ENCODE measurements at regions of chr7 and their contacts with region 1.

Region 1: GRCh38 chr7:73606801-73607691 is 17.3 kb downstream of the MLXIPL start:
- DNase-seq: peak; percentile 43
- H3K4me3 ChIP-seq: no peak overlapping the region
- H3K27ac ChIP-seq: no peak overlapping the region
- H3K4me1 ChIP-seq: no peaks in the 10 kb centered on the region
- H3K27me3 ChIP-seq: no peaks in the 10 kb centered on the region
- CTCF ChIP-seq: peak; percentile 90 to 92
- POLR2A ChIP-seq: no peak

Region 2: GRCh38 chr7:73578342-73579127 is 28.5 kb before region 1 on chr7 and contains the start of gene TBL2:
- CTCF ChIA-PET with region 1: interaction called, 13 read pairs
- POLR2A ChIA-PET with region 1: no interaction called
- dilution Hi-C with region 1: no loop called
- intact Hi-C with region 1: no loop called
- DNase-seq: peak; percentile 99
- H3K4me3 ChIP-seq: peak within 1 kb of the TSS; percentile 74 to 95 (median 87)
- H3K27ac ChIP-seq: peak within 1 kb of the TSS; percentile 72
- H3K4me1 ChIP-seq: peaks cover 20% of the 10 kb centered on the region
- H3K27me3 ChIP-seq: no peaks in the 10 kb centered on the region
- CTCF ChIP-seq: peak in 1 of 2 donors; percentile 25
- POLR2A ChIP-seq: peak; percentile 97
- total RNA-seq, gene TBL2: 34.8 and 38.6 TPM in 2 replicates

Region 3: DNA sequence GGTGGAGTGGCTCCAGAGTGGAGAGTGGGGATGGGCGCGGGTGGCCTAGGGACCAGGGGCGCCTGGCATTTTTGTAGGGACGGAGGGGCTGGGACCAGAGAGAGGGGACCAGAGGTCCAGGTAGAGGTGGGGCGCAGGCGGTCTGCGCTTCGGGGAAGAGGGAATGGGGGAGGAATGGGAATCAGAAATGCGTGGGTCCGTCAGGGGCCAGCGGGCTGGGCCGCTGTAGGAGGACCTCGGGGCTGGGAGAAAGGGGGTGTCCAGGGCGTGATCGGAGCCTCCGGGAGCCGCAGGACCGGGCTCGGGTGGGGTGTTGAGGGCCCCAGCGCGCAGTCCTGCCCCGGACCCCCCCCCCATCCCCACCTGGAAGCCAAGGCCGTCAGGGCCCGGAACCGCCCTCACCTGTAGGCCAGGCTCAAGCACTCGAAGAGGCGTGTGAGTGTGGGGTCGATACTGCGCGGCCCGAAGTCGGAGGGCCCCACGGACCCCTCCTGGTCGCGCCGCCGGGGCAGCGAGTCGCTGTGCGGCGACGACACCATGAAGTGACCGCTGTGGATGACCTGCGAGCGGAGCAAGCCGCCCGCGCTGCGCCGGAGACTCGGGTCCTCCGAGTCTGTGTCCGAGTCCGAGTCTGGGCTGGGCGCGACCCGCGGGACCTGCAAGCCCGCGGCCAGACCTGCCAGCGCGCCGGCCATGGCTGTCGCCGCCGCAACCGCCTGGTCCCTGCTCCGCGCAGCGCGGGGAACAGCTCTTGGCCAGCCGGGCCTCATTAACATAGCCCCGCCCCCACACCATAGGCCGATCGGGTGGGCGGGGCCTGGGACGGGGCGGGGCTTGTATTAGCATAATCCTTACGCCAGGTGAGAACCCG is 17.0 kb after region 1 on chr7 and contains the start of gene MLXIPL:
- CTCF ChIA-PET with region 1: interaction called, 46 read pairs
- POLR2A ChIA-PET with region 1: interaction called, 5 read pairs
- dilution Hi-C with region 1: no loop called
- intact Hi-C with region 1: no loop called
- DNase-seq: peak; percentile 51
- H3K4me3 ChIP-seq: peak within 1 kb of the TSS in 2 of 3 experiments; percentile 25 to 39
- H3K27ac ChIP-seq: no peak within 1 kb of the TSS
- H3K4me1 ChIP-seq: peaks cover 3% of the 10 kb centered on the region
- H3K27me3 ChIP-seq: peaks cover 28 to 39% of the 10 kb centered on the region in 2 experiments
- CTCF ChIP-seq: no peak
- POLR2A ChIP-seq: no peak
- total RNA-seq, gene MLXIPL: not detected in 2 replicates

Region 4: GRCh38 chr7:73701357-73701995 is 94.4 kb after region 1 on chr7:
- CTCF ChIA-PET with region 1: interaction called, 16 read pairs
- POLR2A ChIA-PET with region 1: no interaction called
- dilution Hi-C with region 1: no loop called
- intact Hi-C with region 1: no loop called
- DNase-seq: peak; percentile 46
- H3K4me3 ChIP-seq: no peak overlapping the region
- H3K27ac ChIP-seq: no peak overlapping the region
- H3K4me1 ChIP-seq: no peaks in the 10 kb centered on the region
- H3K27me3 ChIP-seq: no peaks in the 10 kb centered on the region
- CTCF ChIP-seq: peak; percentile 54 to 68
- POLR2A ChIP-seq: no peak

Region 5: GRCh38 chr7:73718905-73719805 is 112.1 kb after region 1 on chr7 and contains the start of gene STX1A:
- CTCF ChIA-PET with region 1: interaction called, 270 read pairs
- POLR2A ChIA-PET with region 1: interaction called, 3 read pairs
- dilution Hi-C with region 1: no loop called
- intact Hi-C with region 1: no loop called
- DNase-seq: peak; percentile 55
- H3K4me3 ChIP-seq: peak within 1 kb of the TSS; percentile 42 to 66 (median 57)
- H3K27ac ChIP-seq: peak within 1 kb of the TSS; percentile 98
- H3K4me1 ChIP-seq: peaks cover 35% of the 10 kb centered on the region
- H3K27me3 ChIP-seq: no peaks in the 10 kb centered on the region
- CTCF ChIP-seq: no peak
- POLR2A ChIP-seq: peak; percentile 77
- total RNA-seq, gene STX1A: 16.8 and 20.8 TPM in 2 replicates

Region 6: DNA sequence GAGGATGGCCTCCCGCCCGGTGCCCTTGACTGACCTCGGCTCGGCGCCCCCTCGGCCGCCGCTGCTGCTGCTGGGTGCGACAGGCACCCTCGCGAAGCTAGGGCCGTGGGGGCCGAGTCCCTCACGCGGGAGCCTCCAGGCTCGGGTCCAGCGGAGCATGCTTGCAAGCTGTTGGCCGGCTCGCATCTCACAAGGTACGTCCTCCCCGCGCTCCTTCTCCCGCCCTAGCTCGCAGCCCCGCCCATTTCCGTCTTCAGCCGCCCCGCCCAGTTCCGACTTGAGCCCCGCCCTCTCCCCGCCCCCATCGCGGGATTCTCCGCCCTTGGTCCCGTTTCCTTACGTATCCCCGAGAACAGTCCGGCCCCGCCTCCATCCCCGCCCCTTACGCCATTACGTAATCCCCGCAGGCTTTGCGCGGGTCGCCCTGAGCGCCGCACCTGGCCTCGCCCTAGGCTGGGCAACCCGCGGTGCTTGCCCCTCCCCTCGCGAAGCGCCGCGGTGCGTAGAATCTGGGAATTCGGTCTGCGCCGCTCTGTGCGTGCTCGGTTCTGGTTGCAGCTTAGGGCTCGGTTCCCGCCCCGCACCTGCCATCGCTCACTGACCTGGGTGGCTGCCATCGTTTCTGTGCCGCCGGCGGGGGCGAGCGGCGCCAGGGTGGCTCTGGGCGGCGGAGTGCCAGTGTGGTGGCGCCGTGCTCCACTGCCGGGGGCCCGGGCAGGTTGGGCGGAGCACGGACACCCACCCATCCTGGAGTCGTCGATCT is 131.7 kb after region 1 on chr7 and contains the start of gene ABHD11:
- CTCF ChIA-PET with region 1: interaction called, 106 read pairs
- POLR2A ChIA-PET with region 1: no interaction called
- dilution Hi-C with region 1: no loop called
- intact Hi-C with region 1: loop called (anchors 2 kb)
- DNase-seq: peak; percentile 96
- H3K4me3 ChIP-seq: peak within 1 kb of the TSS; percentile 52 to 84 (median 79)
- H3K27ac ChIP-seq: peak within 1 kb of the TSS; percentile 41
- H3K4me1 ChIP-seq: peaks cover 8% of the 10 kb centered on the region
- H3K27me3 ChIP-seq: no peaks in the 10 kb centered on the region
- CTCF ChIP-seq: no peak
- POLR2A ChIP-seq: peak; percentile 89
- total RNA-seq, gene ABHD11: 13.3 and 19.0 TPM in 2 replicates

Region 7: GRCh38 chr7:73856941-73857340 is 249.9 kb after region 1 on chr7:
- CTCF ChIA-PET with region 1: interaction called, 21 read pairs
- POLR2A ChIA-PET with region 1: no interaction called
- dilution Hi-C with region 1: no loop called
- intact Hi-C with region 1: loop called (anchors 1 kb)
- DNase-seq: no peak
- H3K4me3 ChIP-seq: no peak overlapping the region
- H3K27ac ChIP-seq: no peak overlapping the region
- H3K4me1 ChIP-seq: peaks cover 7% of the 10 kb centered on the region
- H3K27me3 ChIP-seq: no peaks in the 10 kb centered on the region
- CTCF ChIP-seq: no peak
- POLR2A ChIP-seq: no peak

Measured in endothelial cell of umbilical vein (primary cell).